Sciatic nerve (tissue), 2 donors: ENCODE measurements at regions of chr2 and their contacts with region 1.

Region 1: DNA sequence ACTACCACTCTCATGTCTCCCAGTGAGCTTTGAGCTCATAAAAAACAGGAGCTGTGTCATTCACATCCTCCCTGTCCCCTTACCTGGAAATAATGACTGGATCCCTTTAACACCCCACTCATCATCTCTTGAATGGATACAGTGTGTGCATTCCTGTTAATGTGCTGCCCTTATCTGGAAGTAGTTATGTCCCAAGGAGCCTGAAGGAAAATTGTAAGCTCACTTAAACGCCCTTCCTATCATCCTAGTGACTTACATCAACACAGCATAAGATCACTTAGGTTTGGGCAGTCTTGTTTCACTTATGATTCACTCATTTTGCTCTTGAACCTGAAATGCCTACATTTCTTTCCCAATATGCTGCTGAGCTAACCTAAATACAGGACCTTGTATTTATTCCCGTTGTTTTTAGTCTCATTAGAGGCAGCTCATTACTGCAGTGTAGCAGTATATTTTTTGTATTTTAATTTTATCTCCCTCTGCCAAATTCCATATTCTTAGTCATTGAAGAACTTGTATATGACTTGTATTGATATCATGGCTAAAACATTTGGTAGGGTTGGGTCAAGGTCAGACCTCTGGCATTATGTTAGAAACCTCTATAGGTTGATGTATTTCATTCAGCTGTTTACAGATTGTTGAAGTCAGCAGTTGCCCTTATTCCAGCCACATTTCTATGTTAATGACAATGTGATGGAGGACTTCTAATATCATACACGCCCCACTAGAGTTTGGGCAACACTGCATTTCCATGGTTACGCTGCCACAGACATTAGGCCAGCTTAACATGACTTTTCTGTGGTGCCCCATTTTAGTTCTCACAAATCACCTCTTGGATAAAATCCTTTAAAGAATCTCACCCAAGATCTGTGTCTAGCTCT is 72.9 kb downstream of the PKP4 start:
- DNase-seq: no peak
- ATAC-seq: no peak

Region 2: GRCh38 chr2:158337018-158337417 is 192.6 kb before region 1 on chr2:
- intact Hi-C with region 1: no loop called
- DNase-seq: no peak
- ATAC-seq: no peak

Region 3: GRCh38 chr2:158366342-158366741 is 163.3 kb before region 1 on chr2:
- intact Hi-C with region 1: no loop called
- DNase-seq: no peak
- ATAC-seq: no peak

Region 4: GRCh38 chr2:159022019-159022418 is 492.4 kb after region 1 on chr2:
- intact Hi-C with region 1: loop called (anchors 5 kb)
- DNase-seq: no peak
- ATAC-seq: no peak